Dendritic cell treated with granulocyte-macrophage colony-stimulating factor and Interleukin-4, amounts not matched to agents 40 ng/mL and 50 ng/mL, for 4 days (primary cell): ENCODE measurements at regions of chr11 and their contacts with region 1.

Region 1: DNA sequence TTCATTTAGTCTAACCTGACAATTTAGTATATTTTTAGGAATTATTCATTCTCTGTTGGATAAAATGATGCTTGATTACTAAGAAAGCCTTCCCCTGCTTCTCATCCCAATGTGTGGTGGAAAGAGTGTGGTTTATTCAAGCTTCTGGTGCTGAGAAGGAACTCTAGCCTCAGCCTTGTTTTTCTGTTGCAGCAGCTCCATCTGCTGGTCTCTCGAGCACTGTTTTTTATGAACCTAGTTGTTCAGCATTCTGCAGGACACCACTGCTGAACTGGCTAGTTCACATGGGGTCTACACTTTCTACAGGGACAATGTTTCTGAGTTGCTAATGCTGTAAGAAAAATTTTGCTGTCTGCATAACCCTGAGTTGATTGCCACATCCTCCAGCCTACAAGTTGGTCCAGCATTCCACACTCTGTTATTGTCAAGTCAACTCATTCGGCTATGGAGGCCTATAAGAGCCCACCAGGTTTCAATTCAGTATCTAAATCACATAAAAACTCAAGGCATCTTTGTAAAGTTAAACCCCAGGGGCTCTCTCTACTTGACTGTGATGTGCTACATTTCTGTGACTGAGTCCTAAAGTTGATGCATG is 14.3 kb downstream of the OR2AG2 start:
- H3K4me3 Mint-ChIP-seq: no peak overlapping the region
- H3K27ac Mint-ChIP-seq: no peak overlapping the region
- H3K4me1 Mint-ChIP-seq: no peaks in the 10 kb centered on the region
- H3K27me3 Mint-ChIP-seq: no peaks in the 10 kb centered on the region

Region 2: GRCh38 chr11:6219359-6219758 is 538.1 kb before region 1 on chr11:
- intact Hi-C with region 1: no loop called
- H3K4me3 Mint-ChIP-seq: no peak overlapping the region
- H3K27ac Mint-ChIP-seq: no peak overlapping the region
- H3K4me1 Mint-ChIP-seq: peaks cover 33% of the 10 kb centered on the region
- H3K27me3 Mint-ChIP-seq: no peaks in the 10 kb centered on the region

Region 3: GRCh38 chr11:6531267-6531752 is 226.2 kb before region 1 on chr11:
- intact Hi-C with region 1: loop called (anchors 5 kb)
- H3K4me3 Mint-ChIP-seq: no peak overlapping the region
- H3K27ac Mint-ChIP-seq: no peak overlapping the region
- H3K4me1 Mint-ChIP-seq: no peaks in the 10 kb centered on the region
- H3K27me3 Mint-ChIP-seq: no peaks in the 10 kb centered on the region

Region 4: GRCh38 chr11:6705905-6706535 is 51.5 kb before region 1 on chr11:
- intact Hi-C with region 1: loop called (anchors 1 kb)
- H3K4me3 Mint-ChIP-seq: no peak overlapping the region
- H3K27ac Mint-ChIP-seq: peak overlapping the region; percentile 2
- H3K4me1 Mint-ChIP-seq: peaks cover 24% of the 10 kb centered on the region
- H3K27me3 Mint-ChIP-seq: no peaks in the 10 kb centered on the region

Region 5: GRCh38 chr11:6717426-6717825 is 40.0 kb before region 1 on chr11:
- intact Hi-C with region 1: loop called (anchors 2 kb)
- H3K4me3 Mint-ChIP-seq: no peak overlapping the region
- H3K27ac Mint-ChIP-seq: no peak overlapping the region
- H3K4me1 Mint-ChIP-seq: peaks cover 15% of the 10 kb centered on the region
- H3K27me3 Mint-ChIP-seq: no peaks in the 10 kb centered on the region

Region 6: GRCh38 chr11:6737872-6738466 is 19.5 kb before region 1 on chr11:
- intact Hi-C with region 1: loop called (anchors 1 kb)
- H3K4me3 Mint-ChIP-seq: no peak overlapping the region
- H3K27ac Mint-ChIP-seq: no peak overlapping the region
- H3K4me1 Mint-ChIP-seq: peaks cover 26% of the 10 kb centered on the region
- H3K27me3 Mint-ChIP-seq: no peaks in the 10 kb centered on the region